ENCODE measurements at regions of chr5 and their contacts with region 1.

Region 1: DNA sequence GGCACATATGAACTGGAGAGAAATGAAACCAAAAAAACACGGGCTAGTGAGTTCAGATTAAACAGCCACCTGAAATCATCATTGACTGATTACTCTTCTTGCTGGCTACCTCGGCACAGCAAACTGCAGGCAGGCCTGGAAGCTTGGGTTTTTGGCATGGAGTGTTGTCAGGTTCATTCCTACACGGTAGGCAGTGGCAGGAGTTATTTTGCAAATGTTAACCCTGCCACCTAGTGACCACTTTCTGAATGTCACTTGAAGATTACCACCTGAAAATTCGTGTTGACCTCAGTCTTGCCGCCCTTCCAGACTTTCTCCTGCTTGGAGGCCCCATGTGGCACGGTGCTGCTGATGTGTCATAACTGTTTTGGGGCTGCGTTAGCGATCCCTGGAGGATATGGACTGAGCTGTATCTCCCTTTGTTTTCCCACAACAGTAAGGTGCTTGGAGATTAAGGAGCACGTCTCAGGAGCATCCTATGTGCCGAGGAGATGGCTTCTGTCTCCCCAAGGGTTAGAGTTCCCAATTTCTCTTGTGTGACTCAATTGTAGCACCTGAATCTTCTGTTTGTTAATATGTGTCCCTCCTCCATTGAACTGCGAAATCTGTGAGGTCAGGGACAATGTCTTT is 12.7 kb upstream of the CD180 start:
- DNase-seq: peak; percentile 68
- H3K4me3 Mint-ChIP-seq: no peak overlapping the region
- H3K27ac Mint-ChIP-seq: peak overlapping the region; percentile 66
- H3K4me1 Mint-ChIP-seq: peaks cover 70% of the 10 kb centered on the region
- H3K27me3 Mint-ChIP-seq: no peaks in the 10 kb centered on the region

Region 2: GRCh38 chr5:66828548-66829357 is 380.5 kb before region 1 on chr5:
- CTCF ChIA-PET with region 1: interaction called, 9 read pairs
- POLR2A ChIA-PET with region 1: interaction called, 34 read pairs
- DNase-seq: peak; percentile 82
- H3K4me3 Mint-ChIP-seq: peak overlapping the region; percentile 86
- H3K27ac Mint-ChIP-seq: peak overlapping the region; percentile 84
- H3K4me1 Mint-ChIP-seq: peaks cover 66% of the 10 kb centered on the region
- H3K27me3 Mint-ChIP-seq: no peaks in the 10 kb centered on the region

Region 3: DNA sequence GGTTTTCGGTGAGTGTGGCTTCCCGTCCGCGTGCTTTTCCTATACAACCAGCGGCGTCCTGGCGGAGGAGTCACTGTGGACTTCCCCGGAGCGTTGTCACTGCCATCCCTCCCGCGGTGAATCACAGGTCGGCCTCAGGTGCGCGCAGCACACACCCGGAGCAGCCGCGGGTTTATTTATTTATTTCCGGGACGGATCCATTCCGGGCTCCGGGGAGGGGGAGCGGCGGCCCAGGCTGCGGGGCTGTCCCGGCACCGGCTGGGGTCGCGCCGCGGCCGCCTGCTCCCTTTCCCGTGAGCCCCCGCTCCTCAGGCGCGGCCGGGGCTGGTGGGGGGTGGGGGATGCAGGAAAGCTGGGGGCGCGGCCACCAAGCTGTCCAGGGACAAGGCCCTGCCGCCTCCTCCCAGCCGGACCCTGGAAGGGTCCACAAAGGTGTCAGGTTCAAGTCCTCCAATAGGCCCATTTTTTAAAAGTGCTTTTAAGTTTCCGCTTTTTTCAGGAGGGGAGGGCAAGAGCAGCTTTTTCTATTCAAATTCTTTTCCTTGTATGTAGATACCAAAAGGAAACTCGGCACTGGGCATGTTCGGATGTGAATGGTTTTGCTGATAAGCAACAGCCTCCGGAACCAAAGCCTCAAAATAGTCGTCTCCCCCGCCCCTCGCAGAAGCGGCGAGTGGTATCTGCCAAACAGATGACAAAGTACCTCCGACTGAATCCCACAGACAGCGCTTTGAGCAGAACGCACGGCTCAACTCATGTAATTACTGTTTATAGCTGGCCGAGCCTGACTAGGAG is 205.1 kb before region 1 on chr5:
- CTCF ChIA-PET with region 1: no interaction called
- POLR2A ChIA-PET with region 1: interaction called, 18 read pairs
- DNase-seq: peak; percentile 91
- H3K4me3 Mint-ChIP-seq: peak overlapping the region; percentile 85
- H3K27ac Mint-ChIP-seq: peak overlapping the region; percentile 87
- H3K4me1 Mint-ChIP-seq: peaks cover 50% of the 10 kb centered on the region
- H3K27me3 Mint-ChIP-seq: no peaks in the 10 kb centered on the region

Region 4: GRCh38 chr5:67182301-67182790 is 26.9 kb before region 1 on chr5:
- CTCF ChIA-PET with region 1: interaction called, 3 read pairs
- POLR2A ChIA-PET with region 1: interaction called, 49 read pairs
- DNase-seq: no peak
- H3K4me3 Mint-ChIP-seq: peak overlapping the region; percentile 34
- H3K27ac Mint-ChIP-seq: peak overlapping the region; percentile 77
- H3K4me1 Mint-ChIP-seq: peaks cover 53% of the 10 kb centered on the region
- H3K27me3 Mint-ChIP-seq: no peaks in the 10 kb centered on the region

Region 5: GRCh38 chr5:67221487-67222242 is 12.4 kb after region 1 on chr5:
- CTCF ChIA-PET with region 1: interaction called, 23 read pairs
- POLR2A ChIA-PET with region 1: interaction called, 149 read pairs
- DNase-seq: peak; percentile 82
- H3K4me3 Mint-ChIP-seq: peak overlapping the region; percentile 46
- H3K27ac Mint-ChIP-seq: peak overlapping the region; percentile 95
- H3K4me1 Mint-ChIP-seq: peaks cover 65% of the 10 kb centered on the region
- H3K27me3 Mint-ChIP-seq: no peaks in the 10 kb centered on the region